Right ventricle myocardium inferior (tissue), 1 donor: ENCODE measurements at regions of chr13 and their contacts with region 1.

Region 1: DNA sequence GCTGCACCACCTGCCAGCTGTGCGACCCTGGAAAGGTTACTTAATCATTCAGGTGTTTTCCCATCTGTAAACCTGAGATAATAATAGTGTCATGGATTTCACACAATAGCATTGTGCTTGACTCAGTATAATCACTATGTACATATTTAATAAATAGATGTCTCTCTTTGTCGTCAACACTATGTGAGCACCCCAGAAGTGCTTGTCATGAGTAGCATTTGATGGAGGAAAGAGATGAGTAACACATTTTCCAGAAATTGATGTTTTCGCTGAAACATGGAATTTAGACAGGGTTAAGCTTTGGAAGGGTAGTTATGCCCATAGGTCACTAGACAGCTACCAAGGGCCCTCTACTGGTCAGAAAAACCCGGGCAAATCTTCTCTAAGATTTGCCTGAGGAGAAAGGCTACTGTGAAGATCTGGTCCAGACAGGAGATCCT is 9.5 kb upstream of the MBNL2 start:
- DNase-seq: no peak
- ATAC-seq: peak; percentile 60

Region 2: DNA sequence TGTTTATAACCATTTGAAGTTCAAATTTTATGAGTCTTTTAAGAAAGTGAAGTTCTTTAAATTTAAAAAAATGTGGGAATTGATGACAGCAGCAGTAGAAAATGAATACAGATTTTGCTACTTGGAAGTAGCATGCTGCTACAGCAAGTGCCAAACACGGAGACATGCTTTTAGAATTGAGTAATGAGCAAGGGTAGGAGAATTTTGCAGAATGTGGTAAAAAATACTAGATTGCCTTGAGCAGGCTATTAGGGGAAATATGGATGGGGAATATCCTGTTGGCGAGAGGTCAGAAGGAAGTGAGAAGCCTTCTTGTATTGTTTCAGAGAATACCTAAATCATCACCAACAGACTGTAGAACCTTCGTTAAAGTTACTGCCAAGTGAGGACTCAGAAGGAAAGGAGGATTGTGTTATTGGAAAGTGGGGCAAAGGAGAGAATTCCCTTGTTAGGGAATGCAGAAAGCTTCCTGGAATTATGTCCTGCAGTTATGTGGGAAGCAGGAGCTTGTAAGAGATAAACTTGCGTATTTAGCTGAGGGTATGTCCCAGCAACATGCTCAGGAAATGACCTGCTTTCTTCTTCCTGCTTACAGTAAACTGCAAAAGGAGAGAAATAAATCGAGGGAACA is 186.0 kb before region 1 on chr13:
- intact Hi-C with region 1: loop called (anchors 10 kb)
- DNase-seq: no peak
- ATAC-seq: no peak

Region 3: DNA sequence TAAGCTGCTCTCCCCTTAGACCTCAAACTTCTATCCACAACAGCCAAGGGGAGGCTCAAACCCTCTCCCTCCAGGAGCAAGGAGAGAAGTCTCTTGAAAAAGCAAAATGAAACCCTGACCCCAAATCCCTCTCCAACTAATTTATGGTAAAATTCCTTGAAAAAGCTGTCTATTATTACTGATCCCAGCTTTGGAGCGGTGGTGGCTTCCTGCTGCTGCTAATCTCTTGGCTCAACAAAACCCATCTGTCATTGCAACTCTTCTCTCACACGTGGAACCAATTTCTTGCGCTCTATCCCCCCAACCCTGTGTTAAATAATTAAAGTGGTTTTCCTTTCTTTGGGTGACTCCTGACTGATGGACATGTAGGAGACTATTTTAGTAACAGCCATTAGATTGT is 154.2 kb before region 1 on chr13:
- intact Hi-C with region 1: no loop called
- DNase-seq: no peak
- ATAC-seq: no peak

Region 4: GRCh38 chr13:97109841-97110492 is 102.7 kb before region 1 on chr13:
- intact Hi-C with region 1: loop called (anchors 1 kb)
- DNase-seq: peak; percentile 95
- ATAC-seq: peak; percentile 98

Region 5: GRCh38 chr13:97328222-97328790 is 115.7 kb after region 1 on chr13:
- intact Hi-C with region 1: no loop called
- DNase-seq: no peak
- ATAC-seq: peak; percentile 54

Region 6: DNA sequence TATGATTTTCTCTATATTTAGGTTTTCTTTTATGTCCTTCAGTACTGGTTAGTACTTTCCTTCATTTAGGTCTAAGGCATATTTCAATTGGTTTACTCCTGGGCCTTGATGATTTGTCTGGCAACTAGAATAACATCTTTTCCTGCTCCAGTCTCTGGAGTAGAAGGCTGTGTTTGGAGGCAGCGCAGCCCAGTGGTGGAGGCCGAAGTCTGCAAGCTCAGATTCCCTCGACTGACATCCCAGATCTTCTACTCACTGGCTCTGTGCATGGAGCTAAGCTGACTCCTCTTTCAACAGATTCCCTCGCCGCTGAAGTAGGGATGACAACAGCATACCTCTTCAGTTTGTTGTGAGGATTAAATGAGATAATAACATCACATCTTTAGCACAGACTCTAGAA is 362.3 kb after region 1 on chr13:
- intact Hi-C with region 1: loop called (anchors 5 kb)
- DNase-seq: no peak
- ATAC-seq: no peak